ENCODE measurements at regions of chr4 and their contacts with region 1.

Region 1: DNA sequence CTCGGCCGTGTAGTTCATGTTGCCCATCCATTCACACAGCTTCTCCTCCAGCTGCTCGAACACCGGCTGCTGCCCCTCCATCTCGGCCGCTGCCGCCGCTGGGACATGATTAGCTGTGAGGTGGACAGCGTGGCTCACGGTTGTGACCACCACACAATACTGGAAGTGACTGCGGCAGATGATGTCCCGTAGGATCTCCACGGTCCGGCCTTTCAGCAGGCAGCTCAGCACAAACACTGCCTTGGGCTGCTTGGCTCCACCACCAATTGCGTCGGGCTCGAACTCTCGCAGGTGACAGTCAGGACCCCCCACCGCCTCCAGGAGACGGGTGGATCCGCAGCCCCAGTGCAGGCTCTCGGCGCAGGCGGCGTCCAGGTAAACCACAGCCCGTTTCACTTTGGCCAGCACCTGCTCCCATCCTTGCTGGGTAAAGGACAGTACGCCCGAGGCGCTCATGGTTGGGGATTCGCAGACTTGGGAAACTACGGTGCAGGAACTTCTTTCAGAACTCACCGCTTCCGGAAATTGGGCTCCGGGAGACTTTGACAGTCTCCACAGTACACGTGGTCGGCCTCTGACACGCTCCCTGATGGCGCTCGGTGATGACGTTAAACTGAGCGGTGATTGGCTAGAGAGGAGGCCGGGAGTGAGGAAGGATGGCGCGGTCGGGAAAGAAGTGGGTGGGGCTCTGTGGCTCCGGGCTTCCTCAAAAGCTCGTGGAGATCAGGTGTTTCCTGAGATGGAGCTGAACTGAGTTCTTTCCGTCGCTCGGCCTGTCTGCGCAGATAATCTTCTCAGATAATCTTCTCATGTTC is at the start of gene SCFD2:
- H3K4me3 Mint-ChIP-seq: peak within 1 kb of the TSS; percentile 92
- H3K27ac Mint-ChIP-seq: peak within 1 kb of the TSS; percentile 90
- H3K4me1 Mint-ChIP-seq: peaks cover 39% of the 10 kb centered on the region
- H3K27me3 Mint-ChIP-seq: peaks cover 14% of the 10 kb centered on the region

Region 2: DNA sequence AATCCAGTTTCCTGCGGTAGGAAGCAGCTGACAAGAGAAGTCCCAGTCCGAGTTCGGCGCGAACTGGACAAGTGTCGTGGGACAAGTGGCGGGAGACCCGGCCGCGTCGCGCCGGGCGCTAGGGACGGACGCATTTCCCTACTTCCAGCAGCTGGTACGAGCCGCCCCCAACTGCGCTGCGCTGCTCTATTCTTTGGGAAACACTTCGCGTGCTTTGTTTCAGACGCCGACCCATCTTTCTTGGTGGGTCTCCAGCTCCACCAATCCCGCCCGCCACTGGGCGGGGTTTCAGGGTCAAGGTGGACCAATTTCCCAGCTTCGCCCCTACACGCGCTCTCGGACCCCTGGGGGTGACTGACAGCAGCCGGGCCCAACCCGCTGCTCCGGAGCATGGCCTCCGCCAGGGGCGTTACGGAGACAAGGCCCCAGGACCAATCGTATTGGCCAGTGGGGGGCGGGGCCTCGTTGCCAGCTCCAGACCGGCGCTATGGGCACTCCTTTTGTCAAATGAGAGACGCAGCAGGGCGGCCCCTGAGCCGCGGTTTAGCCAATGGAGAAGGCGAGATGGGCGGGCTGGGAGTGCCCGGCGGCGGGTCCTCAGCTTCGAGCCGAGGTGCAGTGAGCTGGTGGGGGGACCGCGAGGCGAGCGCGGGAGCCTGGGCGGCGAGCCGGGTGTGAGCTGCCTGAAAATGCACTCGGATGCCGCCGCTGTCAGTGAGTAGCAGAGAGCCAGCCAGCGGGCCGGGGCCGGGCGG is 1523.0 kb before region 1 on chr4 and contains the start of gene DCUN1D4:
- intact Hi-C with region 1: loop called (anchors 10 kb)
- H3K4me3 Mint-ChIP-seq: peak within 1 kb of the TSS; percentile 93
- H3K27ac Mint-ChIP-seq: peak within 1 kb of the TSS; percentile 86
- H3K4me1 Mint-ChIP-seq: peaks cover 17% of the 10 kb centered on the region
- H3K27me3 Mint-ChIP-seq: peaks cover 13% of the 10 kb centered on the region

Region 3: DNA sequence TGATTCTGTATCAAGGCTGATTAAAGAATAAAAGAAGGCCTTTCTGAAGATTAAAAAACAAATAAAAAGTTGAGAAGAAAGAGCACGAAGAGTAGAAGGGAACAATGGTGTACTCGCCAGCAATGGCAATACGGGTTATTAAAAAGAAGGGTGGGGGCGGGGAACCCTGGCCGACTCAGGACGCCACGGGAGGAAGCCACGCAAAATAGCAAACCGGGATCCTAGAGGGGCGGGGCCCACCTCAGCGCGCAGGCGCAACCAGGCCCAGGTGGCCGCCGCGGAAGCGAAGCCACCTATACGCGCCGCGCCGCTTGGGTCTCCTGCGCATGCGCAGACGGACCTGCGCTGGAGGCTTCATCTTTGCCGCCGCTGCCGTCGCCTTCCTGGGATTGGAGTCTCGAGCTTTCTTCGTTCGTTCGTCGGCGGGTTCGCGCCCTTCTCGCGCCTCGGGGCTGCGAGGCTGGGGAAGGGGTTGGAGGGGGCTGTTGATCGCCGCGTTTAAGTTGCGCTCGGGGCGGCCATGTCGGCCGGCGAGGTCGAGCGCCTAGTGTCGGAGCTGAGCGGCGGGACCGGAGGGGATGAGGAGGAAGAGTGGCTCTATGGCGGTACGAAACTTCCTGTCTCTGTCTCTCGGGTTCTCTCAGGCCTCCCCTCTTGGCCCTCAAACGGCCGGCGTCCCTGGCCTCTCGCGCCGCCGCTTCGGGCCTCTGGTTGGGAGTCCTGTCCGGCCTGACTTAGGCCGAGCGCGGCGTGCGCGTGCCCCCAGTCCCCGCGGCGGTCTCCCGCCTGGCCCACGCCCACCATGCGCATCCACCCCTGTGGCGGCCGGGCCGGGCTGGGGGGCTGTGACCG is 11.9 kb after region 1 on chr4 and contains the start of gene FIP1L1:
- intact Hi-C with region 1: loop called (anchors 1 kb)
- H3K4me3 Mint-ChIP-seq: peak within 1 kb of the TSS; percentile 99
- H3K27ac Mint-ChIP-seq: peak within 1 kb of the TSS; percentile 98
- H3K4me1 Mint-ChIP-seq: peaks cover 27% of the 10 kb centered on the region
- H3K27me3 Mint-ChIP-seq: no peaks in the 10 kb centered on the region

Region 4: DNA sequence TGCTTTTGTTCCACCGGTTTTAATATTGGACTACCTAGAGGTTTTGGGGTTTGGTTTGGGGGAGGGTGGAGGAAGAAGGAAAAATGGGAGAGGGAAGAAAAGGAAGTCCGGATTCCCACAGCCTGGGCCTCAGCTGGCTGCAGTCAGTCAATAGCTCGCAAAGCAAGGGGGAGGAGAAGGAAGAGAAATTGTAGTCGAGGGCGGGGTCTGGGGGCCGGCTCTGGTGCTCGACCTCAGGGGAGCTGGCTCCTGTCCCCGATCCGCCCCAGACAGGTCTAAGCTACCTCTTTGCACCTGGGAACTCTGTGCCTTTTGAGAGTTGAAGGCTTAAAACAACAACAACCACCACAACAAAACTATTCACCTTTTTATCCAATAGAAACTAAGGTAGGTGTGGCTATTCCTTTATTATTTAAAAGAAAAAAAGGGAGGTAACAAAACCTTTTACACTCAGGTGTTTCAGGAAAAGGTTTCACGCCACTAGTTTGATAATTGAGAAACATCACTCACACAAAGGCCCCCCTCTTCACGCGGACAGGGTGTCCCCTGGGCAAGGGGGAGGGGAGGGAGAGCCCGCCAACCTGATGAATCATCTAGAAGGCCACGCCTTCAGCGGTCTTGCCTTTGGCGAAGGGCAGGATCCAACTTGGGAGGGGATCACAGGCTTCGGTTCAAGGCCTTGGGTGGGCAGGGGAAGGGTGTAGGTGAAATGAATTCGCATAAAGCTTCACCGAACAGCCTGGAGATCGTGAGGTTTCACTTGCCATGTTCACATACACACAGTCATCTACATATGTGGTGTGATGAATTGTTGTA is 227.2 kb after region 1 on chr4:
- intact Hi-C with region 1: no loop called
- H3K4me3 Mint-ChIP-seq: peak overlapping the region; percentile 39
- H3K27ac Mint-ChIP-seq: no peak overlapping the region
- H3K4me1 Mint-ChIP-seq: peaks cover 24% of the 10 kb centered on the region
- H3K27me3 Mint-ChIP-seq: peaks cover 22% of the 10 kb centered on the region

Measured in dendritic cell treated with granulocyte-macrophage colony-stimulating factor and Interleukin-4, amounts not matched to agents 40 ng/mL and 50 ng/mL, for 4 days (primary cell).